ENCODE measurements at regions of chr3 and their contacts with region 1.

Region 1: GRCh38 chr3:19348929-19349564 is 200.7 kb downstream of the KCNH8 start:
- DNase-seq: peak; percentile 6
- ATAC-seq: peak; percentile 68
- H3K4me3 Mint-ChIP-seq: no peak overlapping the region
- H3K27ac Mint-ChIP-seq: no peak overlapping the region
- H3K4me1 Mint-ChIP-seq: no peaks in the 10 kb centered on the region
- H3K27me3 Mint-ChIP-seq: peaks cover 2% of the 10 kb centered on the region
- CTCF ChIP-seq: peak; percentile 75

Region 2: GRCh38 chr3:19338769-19339168 is 10.3 kb before region 1 on chr3:
- CTCF ChIA-PET with region 1: interaction called, 14 read pairs
- POLR2A ChIA-PET with region 1: no interaction called
- intact Hi-C with region 1: no loop called
- DNase-seq: no peak
- ATAC-seq: no peak
- H3K4me3 Mint-ChIP-seq: no peak overlapping the region
- H3K27ac Mint-ChIP-seq: no peak overlapping the region
- H3K4me1 Mint-ChIP-seq: no peaks in the 10 kb centered on the region
- H3K27me3 Mint-ChIP-seq: no peaks in the 10 kb centered on the region
- CTCF ChIP-seq: no peak

Region 3: DNA sequence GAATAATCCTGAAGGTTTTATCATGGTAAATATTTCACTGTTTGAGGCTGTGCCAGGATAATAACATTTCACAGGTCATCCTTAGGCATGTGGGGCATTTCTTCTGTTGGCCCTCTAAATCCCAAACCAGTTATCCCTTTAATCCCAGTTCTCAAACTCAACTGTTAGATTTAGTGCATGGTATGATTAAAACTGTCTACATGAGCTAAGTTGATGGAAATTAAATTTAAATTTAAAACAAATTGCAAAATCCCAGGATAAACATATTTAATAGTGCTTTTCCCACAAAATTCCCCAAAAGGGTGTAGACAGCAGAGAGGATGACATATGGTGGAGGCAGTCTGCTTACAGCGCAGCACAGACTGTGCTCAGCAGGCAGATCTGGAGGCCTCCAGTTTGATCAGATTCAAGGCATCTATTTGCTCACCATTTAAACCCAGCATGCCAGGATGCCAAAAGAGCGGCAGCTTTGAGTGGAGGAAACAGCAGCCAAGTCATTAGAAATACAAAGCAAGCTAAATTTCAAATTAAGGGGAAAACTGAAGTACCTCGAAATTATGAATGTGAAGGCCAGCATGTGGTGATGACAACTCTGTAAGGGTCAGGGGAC is 125.0 kb after region 1 on chr3:
- CTCF ChIA-PET with region 1: no interaction called
- POLR2A ChIA-PET with region 1: no interaction called
- intact Hi-C with region 1: no loop called
- DNase-seq: no peak
- ATAC-seq: no peak
- H3K4me3 Mint-ChIP-seq: no peak overlapping the region
- H3K27ac Mint-ChIP-seq: no peak overlapping the region
- H3K4me1 Mint-ChIP-seq: no peaks in the 10 kb centered on the region
- H3K27me3 Mint-ChIP-seq: no peaks in the 10 kb centered on the region
- CTCF ChIP-seq: no peak

Region 4: GRCh38 chr3:19543212-19543841 is 194.3 kb after region 1 on chr3:
- CTCF ChIA-PET with region 1: interaction called, 5 read pairs
- POLR2A ChIA-PET with region 1: no interaction called
- intact Hi-C with region 1: loop called (anchors 10 kb)
- DNase-seq: no peak
- ATAC-seq: no peak
- H3K4me3 Mint-ChIP-seq: no peak overlapping the region
- H3K27ac Mint-ChIP-seq: no peak overlapping the region
- H3K4me1 Mint-ChIP-seq: no peaks in the 10 kb centered on the region
- H3K27me3 Mint-ChIP-seq: no peaks in the 10 kb centered on the region
- CTCF ChIP-seq: peak; percentile 48

Region 5: GRCh38 chr3:19866751-19867347 is 517.8 kb after region 1 on chr3:
- CTCF ChIA-PET with region 1: interaction called, 48 read pairs
- POLR2A ChIA-PET with region 1: no interaction called
- intact Hi-C with region 1: loop called (anchors 5 kb)
- DNase-seq: peak; percentile 58
- ATAC-seq: peak; percentile 61
- H3K4me3 Mint-ChIP-seq: no peak overlapping the region
- H3K27ac Mint-ChIP-seq: no peak overlapping the region
- H3K4me1 Mint-ChIP-seq: no peaks in the 10 kb centered on the region
- H3K27me3 Mint-ChIP-seq: peaks cover 4% of the 10 kb centered on the region
- CTCF ChIP-seq: peak; percentile 79